ENCODE measurements at regions of chr6 and their contacts with region 1.

Region 1: DNA sequence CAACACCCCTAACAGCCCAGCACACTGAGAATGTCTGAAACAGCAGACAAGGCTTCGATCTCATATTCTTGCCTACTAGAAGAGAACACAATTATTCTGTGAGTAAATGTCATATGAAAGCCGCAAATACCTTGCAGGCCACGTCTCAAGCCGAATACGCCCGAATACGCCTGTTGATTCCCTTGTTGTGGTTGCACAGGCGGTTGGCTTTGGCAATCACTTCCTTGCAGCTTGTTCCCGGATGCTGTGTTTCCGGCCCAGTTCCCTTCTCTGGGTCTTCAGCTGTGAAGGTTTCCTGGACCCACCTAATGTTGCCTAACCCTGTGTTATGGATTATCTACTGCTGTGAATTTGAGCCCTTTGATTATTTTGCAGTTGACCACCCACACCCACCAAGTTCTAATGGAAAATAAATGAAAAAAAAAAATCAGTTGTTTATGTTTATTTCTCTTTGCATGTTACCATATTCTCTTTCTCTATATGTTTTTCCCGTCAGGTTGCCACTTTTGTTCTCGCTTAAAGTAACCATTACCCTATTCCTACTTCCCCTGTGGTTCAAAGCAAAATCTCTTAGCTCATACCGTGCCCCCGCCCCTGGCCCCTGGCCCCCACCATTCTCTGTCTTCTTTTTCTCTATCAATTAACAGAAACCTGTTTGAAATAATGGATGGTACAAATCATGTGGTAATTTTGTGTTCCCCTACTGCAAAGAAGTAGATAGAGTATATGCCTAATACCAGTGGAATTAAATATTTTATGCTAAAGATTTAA is 172.4 kb downstream of the ADGB start:
- DNase-seq: no peak
- H3K4me3 ChIP-seq: no peak overlapping the region
- H3K27ac ChIP-seq: no peak overlapping the region
- H3K27me3 ChIP-seq: no peaks in the 10 kb centered on the region
- CTCF ChIP-seq: no peak

Region 2: GRCh38 chr6:146664871-146665351 is 106.2 kb before region 1 on chr6:
- CTCF ChIA-PET with region 1: no interaction called
- POLR2A ChIA-PET with region 1: no interaction called
- DNase-seq: no peak
- H3K4me3 ChIP-seq: no peak overlapping the region
- H3K27ac ChIP-seq: no peak overlapping the region
- H3K27me3 ChIP-seq: no peaks in the 10 kb centered on the region
- CTCF ChIP-seq: no peak

Region 3: GRCh38 chr6:146785001-146785585 is 13.9 kb after region 1 on chr6:
- CTCF ChIA-PET with region 1: interaction called, 11 read pairs
- POLR2A ChIA-PET with region 1: no interaction called
- DNase-seq: peak; percentile 6
- H3K4me3 ChIP-seq: no peak overlapping the region
- H3K27ac ChIP-seq: no peak overlapping the region
- H3K27me3 ChIP-seq: no peaks in the 10 kb centered on the region
- CTCF ChIP-seq: peak; percentile 62